Mammary epithelial cell (primary cell): ENCODE measurements at regions of chr9 and their contacts with region 1.

Region 1: GRCh38 chr9:122099271-122099869 is 6.3 kb upstream of the TTLL11 start:
- DNase-seq: peak; percentile 54
- H3K4me3 ChIP-seq: peak overlapping the region in 2 of 3 experiments; percentile 1 to 17
- H3K27ac ChIP-seq: no peak overlapping the region
- H3K4me1 ChIP-seq: no peaks in the 10 kb centered on the region
- H3K27me3 ChIP-seq: no peaks in the 10 kb centered on the region
- CTCF ChIP-seq: peak; percentile 76 to 81

Region 2: GRCh38 chr9:122340161-122340560 is 240.8 kb after region 1 on chr9:
- CTCF ChIA-PET with region 1: no interaction called
- dilution Hi-C with region 1: no loop called
- in situ Hi-C with region 1: loop called in 1 of 2 experiments (anchors 5 kb)
- intact Hi-C with region 1: no loop called
- DNase-seq: no peak
- H3K4me3 ChIP-seq: no peak overlapping the region
- H3K27ac ChIP-seq: no peak overlapping the region
- H3K4me1 ChIP-seq: no peaks in the 10 kb centered on the region
- H3K27me3 ChIP-seq: no peaks in the 10 kb centered on the region
- CTCF ChIP-seq: no peak